AG04450 (cell line): ENCODE measurements at regions of chr2 and their contacts with region 1.

Region 1: GRCh38 chr2:10072656-10073480 is 7.3 kb downstream of the CYS1 start:
- DNase-seq: peak; percentile 71
- H3K4me3 ChIP-seq: no peak overlapping the region
- H3K27ac ChIP-seq: no peak overlapping the region
- H3K27me3 ChIP-seq: peaks cover 39% of the 10 kb centered on the region
- CTCF ChIP-seq: peak; percentile 88

Region 2: GRCh38 chr2:9799665-9800632 is 272.9 kb before region 1 on chr2:
- CTCF ChIA-PET with region 1: interaction called, 27 read pairs
- POLR2A ChIA-PET with region 1: no interaction called
- DNase-seq: peak; percentile 44
- H3K4me3 ChIP-seq: no peak overlapping the region
- H3K27ac ChIP-seq: no peak overlapping the region
- H3K27me3 ChIP-seq: no peaks in the 10 kb centered on the region
- CTCF ChIP-seq: peak; percentile 99

Region 3: GRCh38 chr2:10057231-10058107 is 15.4 kb before region 1 on chr2:
- CTCF ChIA-PET with region 1: interaction called, 17 read pairs
- POLR2A ChIA-PET with region 1: no interaction called
- DNase-seq: peak; percentile 62
- H3K4me3 ChIP-seq: peak overlapping the region; percentile 39
- H3K27ac ChIP-seq: peak overlapping the region; percentile 94
- H3K27me3 ChIP-seq: peaks cover 9% of the 10 kb centered on the region
- CTCF ChIP-seq: no peak

Region 4: DNA sequence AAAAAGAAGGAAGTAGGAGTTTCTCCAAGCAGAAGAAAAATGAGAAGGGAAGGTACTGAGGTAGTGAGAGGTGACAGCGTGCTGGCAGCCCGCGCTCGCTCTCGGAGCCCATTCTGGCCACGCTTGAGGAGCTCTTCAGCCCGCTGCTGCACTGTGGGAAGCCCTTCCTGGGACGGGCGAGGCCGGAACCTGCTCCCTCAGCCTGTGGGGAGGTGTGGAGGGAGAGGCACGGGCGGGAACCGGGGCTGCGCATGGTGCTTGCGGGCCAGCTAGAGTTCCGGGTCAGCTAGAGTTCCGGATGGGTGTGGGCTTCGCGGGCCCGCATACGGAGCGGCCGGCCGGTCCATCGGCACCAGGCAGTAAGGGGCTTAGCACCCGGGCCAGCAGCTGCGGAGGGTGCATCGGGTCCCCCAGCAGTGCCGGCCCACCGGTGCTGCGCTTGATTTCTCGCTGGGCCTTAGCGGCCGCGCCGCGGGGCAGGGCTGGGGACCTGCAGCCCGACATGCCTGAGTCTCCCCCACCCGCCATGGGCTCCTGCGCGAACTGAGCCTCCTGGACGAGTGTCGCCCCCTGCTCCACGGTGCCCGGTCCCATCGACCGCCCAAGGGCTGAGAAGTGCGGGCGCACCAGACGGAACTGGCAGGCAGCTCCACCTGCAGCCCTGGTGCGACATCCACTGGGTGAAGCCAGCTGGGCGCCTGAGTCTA is 18.5 kb after region 1 on chr2:
- CTCF ChIA-PET with region 1: interaction called, 99 read pairs
- POLR2A ChIA-PET with region 1: no interaction called
- DNase-seq: no peak
- H3K4me3 ChIP-seq: peak overlapping the region; percentile 7; the same call in 1 of the 2 replicates
- H3K27ac ChIP-seq: no peak overlapping the region
- H3K27me3 ChIP-seq: peaks cover 40% of the 10 kb centered on the region
- CTCF ChIP-seq: no peak

Region 5: GRCh38 chr2:10097352-10098148 is 24.7 kb after region 1 on chr2:
- CTCF ChIA-PET with region 1: interaction called, 99 read pairs
- POLR2A ChIA-PET with region 1: interaction called, 3 read pairs
- DNase-seq: no peak
- H3K4me3 ChIP-seq: no peak overlapping the region
- H3K27ac ChIP-seq: no peak overlapping the region
- H3K27me3 ChIP-seq: peaks cover 2% of the 10 kb centered on the region
- CTCF ChIP-seq: peak; percentile 95

Region 6: DNA sequence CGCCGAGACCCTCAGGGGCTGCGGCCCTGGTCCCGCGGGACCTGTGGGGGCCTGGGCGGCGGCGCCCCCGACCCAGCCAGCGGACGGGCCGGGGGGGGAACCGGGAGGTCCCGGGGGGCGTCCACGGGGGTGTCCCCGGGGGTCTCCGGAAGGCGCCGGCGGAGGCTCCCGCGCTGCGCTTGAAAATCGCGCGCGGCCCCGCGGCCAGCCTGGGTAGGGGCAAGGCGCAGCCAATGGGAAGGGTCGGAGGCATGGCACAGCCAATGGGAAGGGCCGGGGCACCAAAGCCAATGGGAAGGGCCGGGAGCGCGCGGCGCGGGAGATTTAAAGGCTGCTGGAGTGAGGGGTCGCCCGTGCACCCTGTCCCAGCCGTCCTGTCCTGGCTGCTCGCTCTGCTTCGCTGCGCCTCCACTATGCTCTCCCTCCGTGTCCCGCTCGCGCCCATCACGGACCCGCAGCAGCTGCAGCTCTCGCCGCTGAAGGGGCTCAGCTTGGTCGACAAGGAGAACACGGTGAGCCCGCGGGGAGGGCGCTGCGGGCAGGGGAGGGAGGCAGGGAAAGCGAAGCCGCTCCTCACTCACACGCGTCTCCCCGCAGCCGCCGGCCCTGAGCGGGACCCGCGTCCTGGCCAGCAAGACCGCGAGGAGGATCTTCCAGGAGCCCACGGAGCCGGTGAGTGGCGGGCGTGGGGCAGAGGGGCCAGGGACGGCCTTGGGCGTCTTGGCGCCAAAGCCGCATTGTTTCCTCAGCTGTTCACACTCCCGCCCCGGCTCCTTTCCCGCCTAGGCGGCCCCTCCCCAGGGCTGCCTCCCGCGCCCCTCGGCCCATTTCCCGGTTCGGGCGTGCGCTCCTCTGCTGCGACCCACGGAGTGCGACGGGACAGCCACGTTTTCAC is 49.8 kb after region 1 on chr2 and contains the start of gene RRM2:
- CTCF ChIA-PET with region 1: interaction called, 10 read pairs
- POLR2A ChIA-PET with region 1: no interaction called
- DNase-seq: peak; percentile 51
- H3K4me3 ChIP-seq: peak within 1 kb of the TSS; percentile 79
- H3K27ac ChIP-seq: peak within 1 kb of the TSS; percentile 47
- H3K27me3 ChIP-seq: no peaks in the 10 kb centered on the region
- CTCF ChIP-seq: no peak
- polyA plus RNA-seq, gene RRM2: 13.7 and 21.7 TPM in 2 replicates

Region 7: DNA sequence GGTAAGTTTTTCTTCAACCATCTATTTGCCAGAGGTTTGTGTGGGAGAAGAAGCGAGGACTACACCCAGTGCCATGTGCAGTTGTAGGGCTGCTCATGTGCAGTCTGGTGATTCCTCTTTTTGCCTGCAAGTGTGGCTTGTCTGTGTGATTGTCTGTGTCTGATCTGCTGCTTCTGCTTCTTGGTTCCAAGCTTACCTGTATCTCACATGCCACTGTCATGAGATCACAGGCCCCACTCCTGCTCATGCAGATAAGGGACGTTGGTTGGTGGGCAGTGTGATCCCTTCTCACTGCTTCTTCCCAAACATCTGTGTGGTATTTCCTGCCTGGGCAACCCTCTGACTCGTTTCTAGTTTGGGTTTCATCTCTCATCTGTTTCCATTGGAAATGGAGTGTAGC is 76.8 kb after region 1 on chr2:
- CTCF ChIA-PET with region 1: no interaction called
- POLR2A ChIA-PET with region 1: no interaction called
- DNase-seq: no peak
- H3K4me3 ChIP-seq: no peak overlapping the region
- H3K27ac ChIP-seq: no peak overlapping the region
- H3K27me3 ChIP-seq: no peaks in the 10 kb centered on the region
- CTCF ChIP-seq: no peak